ENCODE measurements at regions of chr7 and their contacts with region 1.

Region 1: GRCh38 chr7:27160546-27161213 is 4.2 kb upstream of the HOXA7 start:
- DNase-seq: peak; percentile 59 to 96
- H3K4me3 ChIP-seq: peak overlapping the region in 3 of 4 experiments; percentile 38 to 60 (median 45); a peak in 5 of 8 replicates
- H3K27ac ChIP-seq: no peak overlapping the region
- H3K4me1 ChIP-seq: peaks cover 0 to 2% (median 0%) of the 10 kb centered on the region in 4 experiments; a peak in 4 of 7 replicates
- H3K27me3 ChIP-seq: peaks cover 98 to 100% (median 99%) of the 10 kb centered on the region in 4 experiments
- CTCF ChIP-seq: peak; percentile 83 to 99 (median 91)
- EP300 ChIP-seq: no peak
- POLR2A ChIP-seq: no peak
- RAD21 ChIP-seq: peak; percentile 93 to 95

Region 2: DNA sequence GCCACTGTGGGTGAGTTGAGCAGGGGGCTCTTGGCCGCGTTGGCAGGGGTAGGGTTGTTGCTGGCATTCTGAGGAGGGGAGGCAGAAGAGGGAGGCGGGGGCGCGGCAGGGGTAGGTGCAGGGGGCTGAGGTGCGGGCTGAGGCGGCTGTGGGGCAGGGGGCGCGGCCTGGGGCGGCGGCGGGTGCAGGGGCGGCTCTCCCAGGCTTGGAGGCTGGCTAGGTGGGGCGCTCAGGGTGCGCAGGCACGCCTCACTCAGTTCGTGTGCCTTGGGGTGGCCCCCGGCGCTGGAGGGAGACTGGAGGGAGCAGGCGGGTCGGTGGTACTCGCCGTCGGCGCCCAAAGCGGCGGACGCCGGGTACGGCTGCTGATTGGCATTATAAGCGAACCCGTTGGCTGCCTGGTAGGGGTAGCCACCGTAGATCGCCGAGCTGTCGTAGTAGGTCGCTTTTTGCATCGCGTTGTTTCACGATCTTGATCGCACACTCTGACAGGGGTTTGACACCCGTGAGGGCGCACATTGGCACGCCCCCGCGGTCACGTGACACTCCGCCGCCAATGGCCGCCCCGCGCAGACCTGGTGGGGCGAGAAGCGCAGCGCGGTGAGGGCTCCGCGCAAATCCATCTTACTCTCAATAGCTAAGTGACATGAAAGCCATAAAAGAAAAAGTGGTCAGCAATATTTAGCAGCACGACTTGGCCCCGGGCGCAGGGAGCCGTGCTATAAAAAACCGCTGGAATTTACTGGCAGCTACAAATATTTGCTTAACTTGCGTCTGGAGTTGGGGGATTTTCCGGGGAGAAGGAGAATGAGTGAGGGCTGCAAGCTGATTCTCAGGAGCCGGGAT is 50.3 kb before region 1 on chr7:
- CTCF ChIA-PET with region 1: interaction called, 13 read pairs
- POLR2A ChIA-PET with region 1: no interaction called
- DNase-seq: peak in 1 of 2 experiments; percentile 83
- H3K4me3 ChIP-seq: peak overlapping the region in 3 of 4 experiments; percentile 11 to 46 (median 23); a peak in 5 of 8 replicates
- H3K27ac ChIP-seq: no peak overlapping the region
- H3K4me1 ChIP-seq: peaks cover 0 to 22% (median 8%) of the 10 kb centered on the region in 4 experiments; a peak in 5 of 7 replicates
- H3K27me3 ChIP-seq: peaks cover 93 to 98% (median 97%) of the 10 kb centered on the region in 4 experiments
- CTCF ChIP-seq: no peak
- EP300 ChIP-seq: no peak
- POLR2A ChIP-seq: no peak
- RAD21 ChIP-seq: no peak

Region 3: DNA sequence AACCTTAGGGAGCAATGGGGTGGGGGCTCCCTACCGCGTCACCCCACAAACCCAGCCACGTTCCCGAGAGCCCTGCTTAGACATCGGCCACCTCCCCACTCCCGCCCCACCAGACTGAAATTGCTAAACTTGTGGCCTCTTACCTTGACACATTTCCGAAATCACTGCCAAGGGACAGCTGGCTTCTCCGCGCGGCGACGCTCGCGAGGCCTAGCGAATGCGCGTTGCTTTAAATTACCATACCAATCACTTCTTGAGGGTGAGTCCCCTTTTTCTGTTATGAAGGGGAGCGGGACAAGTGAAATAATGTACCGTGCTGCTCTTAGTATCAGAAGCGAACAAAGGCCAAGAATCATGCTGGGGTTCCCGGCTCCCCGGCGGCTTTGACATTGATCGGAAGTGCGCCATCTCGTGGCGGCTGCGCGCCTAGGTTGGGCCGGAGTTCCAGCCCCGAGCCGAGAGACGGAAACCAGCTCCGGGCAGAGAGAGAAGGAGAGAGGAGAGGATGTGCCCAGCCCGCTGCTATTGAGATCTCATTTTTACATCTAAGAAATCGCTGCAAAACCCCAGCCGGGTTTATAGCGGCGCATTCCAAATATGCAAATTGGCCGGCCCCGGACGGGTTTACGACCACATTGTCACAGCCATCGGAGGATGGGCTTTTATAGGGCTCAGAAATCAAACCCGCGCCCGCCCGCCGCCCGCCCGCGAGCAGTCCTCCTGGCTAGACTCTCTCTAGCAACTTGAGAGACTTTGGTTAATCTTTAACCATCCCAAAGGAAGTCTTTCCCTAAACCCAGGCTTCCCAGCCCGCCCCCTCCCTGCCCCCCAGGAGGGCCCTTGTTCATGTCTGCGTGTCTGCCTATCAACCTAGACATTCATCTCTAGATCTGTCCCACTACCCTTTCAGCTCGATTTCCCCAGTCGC is 19.1 kb after region 1 on chr7:
- CTCF ChIA-PET with region 1: interaction called, 18 read pairs
- POLR2A ChIA-PET with region 1: no interaction called
- DNase-seq: peak in 1 of 2 experiments; percentile 93
- H3K4me3 ChIP-seq: peak overlapping the region in 1 of 4 experiments; percentile 8; a peak in 1 of 8 replicates
- H3K27ac ChIP-seq: no peak overlapping the region
- H3K4me1 ChIP-seq: peaks cover 1 to 4% (median 3%) of the 10 kb centered on the region in 4 experiments; a peak in 6 of 7 replicates
- H3K27me3 ChIP-seq: peaks cover 98 to 100% (median 100%) of the 10 kb centered on the region in 4 experiments
- CTCF ChIP-seq: peak; percentile 74 to 83 (median 80)
- EP300 ChIP-seq: 0 out of 3 replicates have a peak, but pooled peaks of 1 of the 2 experiments have one; percentile 17
- POLR2A ChIP-seq: no peak
- RAD21 ChIP-seq: peak; percentile 31 to 48; a peak in 3 of 4 replicates

Measured in H1 (cell line).